Left lung (tissue), 14 donors: ENCODE measurements at regions of chr11 and their contacts with region 1.

Region 1: GRCh38 chr11:15985127-15985859 is 371.1 kb downstream of the SOX6 start:
- DNase-seq: peak in 1 of 4 donors; percentile 33
- ATAC-seq: peak; percentile 94
- H3K4me3 ChIP-seq: no peak overlapping the region
- H3K27ac ChIP-seq: peak overlapping the region; percentile 4 to 13
- H3K4me1 ChIP-seq: peaks cover 4 to 5% of the 10 kb centered on the region in 2 donors
- H3K27me3 ChIP-seq: no peaks in the 10 kb centered on the region
- CTCF ChIP-seq: no peak

Region 2: GRCh38 chr11:15793043-15793996 is 192.0 kb before region 1 on chr11:
- intact Hi-C with region 1: no loop called
- DNase-seq: no peak
- ATAC-seq: peak; percentile 63
- H3K4me3 ChIP-seq: no peak overlapping the region
- H3K27ac ChIP-seq: no peak overlapping the region
- H3K4me1 ChIP-seq: no peaks in the 10 kb centered on the region
- H3K27me3 ChIP-seq: no peaks in the 10 kb centered on the region
- CTCF ChIP-seq: no peak

Region 3: DNA sequence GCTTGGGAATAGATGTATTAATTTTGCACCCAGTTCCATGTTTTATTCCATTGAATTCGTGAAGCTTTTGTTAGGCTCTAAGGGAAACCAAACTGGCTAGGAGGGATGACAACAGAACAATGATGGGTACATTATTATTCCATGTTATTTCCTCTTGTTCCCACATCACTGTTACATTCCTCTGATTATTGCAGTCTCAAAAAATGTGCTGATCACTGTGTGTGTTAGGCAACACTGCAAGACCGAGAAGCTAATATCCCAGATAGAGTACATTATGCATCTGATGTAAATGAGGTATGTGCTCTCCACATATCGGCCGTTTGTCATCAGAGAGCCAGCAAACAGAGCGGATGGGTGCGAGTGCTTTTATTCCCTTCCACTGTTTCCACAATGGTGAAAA is 43.1 kb after region 1 on chr11:
- intact Hi-C with region 1: loop called in 1 of 2 experiments (anchors 2 kb)
- DNase-seq: no peak
- ATAC-seq: no peak
- H3K4me3 ChIP-seq: no peak overlapping the region
- H3K27ac ChIP-seq: no peak overlapping the region
- H3K4me1 ChIP-seq: no peaks in the 10 kb centered on the region
- H3K27me3 ChIP-seq: no peaks in the 10 kb centered on the region
- CTCF ChIP-seq: no peak

Region 4: DNA sequence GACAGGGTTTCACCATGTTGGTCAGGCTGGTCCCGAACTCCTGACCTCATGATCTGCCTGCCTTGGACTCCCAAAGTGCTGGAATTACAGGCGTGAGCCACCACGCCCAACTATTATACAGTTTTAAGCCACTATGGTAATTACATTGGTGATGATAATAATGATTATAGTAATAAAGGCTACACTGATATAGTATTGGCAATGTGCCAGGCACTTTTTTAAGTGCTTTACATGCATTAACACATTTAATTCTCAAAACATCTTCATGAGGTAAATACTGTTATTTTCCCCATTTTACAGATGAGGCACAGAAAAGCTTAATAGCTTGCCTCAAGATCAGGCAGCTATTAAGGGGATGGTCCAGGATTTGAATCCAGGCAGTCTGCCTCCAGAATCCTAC is 148.6 kb after region 1 on chr11:
- intact Hi-C with region 1: no loop called
- DNase-seq: no peak
- ATAC-seq: no peak
- H3K4me3 ChIP-seq: no peak overlapping the region
- H3K27ac ChIP-seq: no peak overlapping the region
- H3K4me1 ChIP-seq: no peaks in the 10 kb centered on the region
- H3K27me3 ChIP-seq: no peaks in the 10 kb centered on the region
- CTCF ChIP-seq: no peak

Region 5: GRCh38 chr11:16293204-16293681 is 307.9 kb after region 1 on chr11:
- intact Hi-C with region 1: no loop called
- DNase-seq: peak in 1 of 4 donors; percentile 40
- ATAC-seq: no peak
- H3K4me3 ChIP-seq: no peak overlapping the region
- H3K27ac ChIP-seq: no peak overlapping the region
- H3K4me1 ChIP-seq: no peaks in the 10 kb centered on the region
- H3K27me3 ChIP-seq: no peaks in the 10 kb centered on the region
- CTCF ChIP-seq: no peak

Region 6: DNA sequence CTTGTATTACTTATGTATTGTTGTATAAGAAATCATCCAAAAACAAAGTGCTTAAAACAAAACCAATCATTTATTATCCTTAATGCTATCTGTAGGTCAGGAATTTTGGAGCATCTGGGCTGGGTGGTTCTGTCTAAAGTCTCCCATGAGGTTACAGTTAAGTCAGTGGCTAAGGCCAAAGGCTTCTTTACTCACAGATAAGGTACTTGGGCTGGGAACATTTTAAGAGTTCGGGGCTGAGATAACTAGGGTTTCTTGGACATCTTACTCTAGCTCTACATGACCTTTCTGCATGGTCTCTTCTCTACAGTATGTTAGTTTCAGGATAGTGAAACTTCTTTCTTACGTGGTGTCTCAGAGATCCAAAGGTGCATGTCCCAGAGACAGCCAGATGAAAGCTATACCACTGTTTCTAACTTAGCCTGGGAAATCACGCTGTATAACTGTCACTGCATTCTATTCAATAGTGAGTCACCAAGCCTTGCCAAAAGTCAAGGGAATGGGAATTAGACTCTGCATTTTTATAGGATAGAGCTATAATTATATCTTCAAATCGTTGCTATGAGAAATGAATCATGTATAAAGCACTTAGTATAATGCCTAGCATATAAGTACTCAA is 341.5 kb after region 1 on chr11:
- intact Hi-C with region 1: no loop called
- DNase-seq: no peak
- ATAC-seq: no peak
- H3K4me3 ChIP-seq: no peak overlapping the region
- H3K27ac ChIP-seq: no peak overlapping the region
- H3K4me1 ChIP-seq: no peaks in the 10 kb centered on the region
- H3K27me3 ChIP-seq: no peaks in the 10 kb centered on the region
- CTCF ChIP-seq: no peak